ENCODE measurements at regions of chr7 and their contacts with region 1.

Region 1: GRCh38 chr7:20199015-20199737 is 18.0 kb downstream of the MACC1 start:
- DNase-seq: peak; percentile 83
- H3K4me3 ChIP-seq: no peak overlapping the region
- H3K27ac ChIP-seq: no peak overlapping the region
- H3K4me1 ChIP-seq: peaks cover 11% of the 10 kb centered on the region
- H3K27me3 ChIP-seq: no peaks in the 10 kb centered on the region
- CTCF ChIP-seq: no peak
- POLR2A ChIP-seq: no peak

Region 2: DNA sequence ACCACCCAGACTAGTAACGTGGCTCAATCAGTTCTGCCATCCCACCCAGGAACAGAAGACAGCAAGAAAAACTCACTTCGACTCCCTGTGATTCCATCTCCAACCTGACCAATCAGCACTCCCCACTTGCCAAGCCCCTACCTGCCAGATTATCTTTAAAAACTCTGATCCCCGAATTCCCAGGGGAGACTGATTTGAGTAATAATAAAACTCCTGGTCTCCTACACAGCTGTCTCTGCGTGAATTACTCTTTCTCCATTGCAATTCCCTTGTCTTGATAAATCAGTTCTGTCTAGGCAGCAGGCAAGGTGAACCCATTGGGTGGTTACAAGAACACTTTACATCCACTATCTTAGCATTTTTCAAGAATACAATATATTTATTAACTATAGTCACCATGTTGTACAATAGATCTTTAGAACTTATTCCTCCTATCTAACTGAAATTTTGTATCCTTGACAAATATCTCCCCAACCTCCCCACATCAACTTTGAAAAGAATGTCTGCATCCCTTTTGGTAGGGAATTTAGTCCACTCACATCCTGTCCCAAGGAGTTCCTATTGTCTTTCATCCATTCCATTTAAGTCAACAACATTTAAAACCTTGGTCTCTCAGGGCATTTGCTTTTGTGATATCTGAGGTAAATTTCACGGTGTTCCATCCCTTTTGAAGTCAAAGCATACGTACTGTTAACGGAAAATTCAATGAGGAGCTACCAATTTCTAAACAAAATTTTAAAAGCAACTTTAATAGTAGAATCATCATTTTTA is 145.7 kb before region 1 on chr7:
- CTCF ChIA-PET with region 1: no interaction called
- POLR2A ChIA-PET with region 1: no interaction called
- dilution Hi-C with region 1: no loop called
- intact Hi-C with region 1: no loop called
- DNase-seq: no peak
- H3K4me3 ChIP-seq: no peak overlapping the region
- H3K27ac ChIP-seq: no peak overlapping the region
- H3K4me1 ChIP-seq: no peaks in the 10 kb centered on the region
- H3K27me3 ChIP-seq: no peaks in the 10 kb centered on the region
- CTCF ChIP-seq: no peak
- POLR2A ChIP-seq: no peak

Region 3: DNA sequence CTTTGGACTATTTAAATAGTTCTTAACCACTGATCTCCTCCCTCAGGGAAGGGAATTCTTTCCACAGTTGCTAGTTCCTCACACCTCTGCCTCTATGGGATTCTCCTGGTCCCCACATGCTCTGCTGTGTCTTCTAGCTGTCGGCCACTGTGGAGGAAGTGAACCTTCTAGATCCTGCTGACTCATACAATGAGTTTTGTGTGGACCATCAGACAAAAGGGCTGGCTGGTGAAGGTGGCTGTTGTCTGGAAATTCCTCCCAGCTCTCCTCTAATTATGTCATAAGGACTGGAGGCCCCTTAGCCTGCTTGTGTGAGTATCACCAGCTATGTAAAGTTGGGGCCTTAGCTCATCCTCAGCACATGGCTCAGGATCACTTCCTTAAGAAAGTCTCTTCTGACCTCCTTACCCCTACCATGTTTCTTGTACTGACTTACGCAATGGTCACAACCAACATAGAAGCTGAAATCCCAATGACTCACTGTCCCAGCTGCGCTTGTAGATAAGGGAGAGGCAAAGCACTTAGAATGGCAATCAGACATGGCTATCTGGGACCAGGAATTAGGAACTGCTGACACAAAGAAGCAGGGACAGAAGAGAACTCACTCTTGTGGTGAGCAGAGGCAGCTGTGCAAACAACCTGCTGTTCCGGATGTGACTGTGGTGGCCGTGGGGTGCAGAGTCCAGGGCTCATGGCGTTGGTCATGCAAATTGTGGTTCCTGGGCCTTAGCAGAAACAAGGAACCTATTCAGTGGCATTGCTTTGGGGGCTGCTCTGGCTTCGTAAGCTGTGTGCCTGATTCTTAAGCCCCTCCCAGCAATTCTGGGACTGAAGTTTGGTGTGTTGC is 20.5 kb after region 1 on chr7:
- CTCF ChIA-PET with region 1: interaction called, 4 read pairs
- POLR2A ChIA-PET with region 1: no interaction called
- dilution Hi-C with region 1: no loop called
- intact Hi-C with region 1: loop called (anchors 1 kb)
- DNase-seq: peak; percentile 95
- H3K4me3 ChIP-seq: no peak overlapping the region
- H3K27ac ChIP-seq: peak overlapping the region; percentile 83
- H3K4me1 ChIP-seq: peaks cover 21% of the 10 kb centered on the region
- H3K27me3 ChIP-seq: no peaks in the 10 kb centered on the region
- CTCF ChIP-seq: no peak
- POLR2A ChIP-seq: peak; percentile 78